Heart right ventricle (tissue), 16 donors: ENCODE measurements at regions of chr7 and their contacts with region 1.

Region 1: DNA sequence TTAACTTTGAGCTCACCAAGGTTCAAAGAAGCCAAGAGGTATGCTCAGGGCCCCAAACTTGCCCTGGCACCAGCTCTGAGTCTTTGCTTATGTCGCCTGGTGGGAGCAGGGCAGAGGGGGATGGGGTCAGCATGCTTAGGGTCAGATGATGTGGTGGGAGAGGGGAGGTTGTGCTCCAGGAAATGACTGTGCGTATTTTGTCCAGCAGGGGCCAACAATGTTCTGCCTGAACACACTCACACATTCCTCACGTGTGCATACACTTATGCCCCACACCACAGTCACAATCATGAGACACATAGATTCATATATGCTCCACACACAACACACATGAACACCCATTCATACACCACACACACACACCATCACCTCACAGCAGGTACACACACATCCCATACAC is 4.4 kb upstream of the RAMP3 start:
- DNase-seq: no peak
- ATAC-seq: no peak
- H3K4me3 ChIP-seq: no peak overlapping the region
- H3K27ac ChIP-seq: no peak overlapping the region
- H3K4me1 ChIP-seq: peaks cover 0 to 18% (median 0%) of the 10 kb centered on the region in 9 donors
- H3K27me3 ChIP-seq: peaks cover 0 to 26% (median 16%) of the 10 kb centered on the region in 7 donors
- CTCF ChIP-seq: no peak

Region 2: GRCh38 chr7:45259966-45260646 is 106.9 kb after region 1 on chr7:
- intact Hi-C with region 1: loop called (anchors 1 to 5 kb)
- DNase-seq: peak; percentile 43 to 71
- ATAC-seq: peak; percentile 56 to 95 (median 82)
- H3K4me3 ChIP-seq: peak overlapping the region in 1 of 10 donors; percentile 17
- H3K27ac ChIP-seq: no peak overlapping the region
- H3K4me1 ChIP-seq: peaks cover 0 to 15% (median 0%) of the 10 kb centered on the region in 9 donors
- H3K27me3 ChIP-seq: peaks cover 0 to 25% (median 0%) of the 10 kb centered on the region in 7 donors
- CTCF ChIP-seq: peak; percentile 95 to 99 (median 98)